Spleen (tissue), 13 donors: ENCODE measurements at regions of chr9 and their contacts with region 1.

Region 1: GRCh38 chr9:83444110-83444509 is 94.1 kb downstream of the FRMD3 start:
- DNase-seq: no peak
- H3K4me3 ChIP-seq: no peak overlapping the region
- H3K27ac ChIP-seq: peak overlapping the region in 5 of 8 donors; percentile 25 to 45 (median 31)
- H3K4me1 ChIP-seq: peaks cover 0 to 54% (median 19%) of the 10 kb centered on the region in 6 donors
- H3K27me3 ChIP-seq: no peaks in the 10 kb centered on the region
- CTCF ChIP-seq: no peak
- POLR2A ChIP-seq: no peak

Region 2: GRCh38 chr9:83509402-83509801 is 65.3 kb after region 1 on chr9:
- intact Hi-C with region 1: loop called (anchors 10 kb)
- DNase-seq: no peak
- H3K4me3 ChIP-seq: no peak overlapping the region
- H3K27ac ChIP-seq: peak overlapping the region in 2 of 8 donors; percentile 21 to 82
- H3K4me1 ChIP-seq: peaks cover 0 to 40% (median 13%) of the 10 kb centered on the region in 6 donors
- H3K27me3 ChIP-seq: no peaks in the 10 kb centered on the region
- CTCF ChIP-seq: no peak
- POLR2A ChIP-seq: no peak